CD4-positive, alpha-beta T cell (primary cell): ENCODE measurements at regions of chr9 and their contacts with region 1.

Region 1: DNA sequence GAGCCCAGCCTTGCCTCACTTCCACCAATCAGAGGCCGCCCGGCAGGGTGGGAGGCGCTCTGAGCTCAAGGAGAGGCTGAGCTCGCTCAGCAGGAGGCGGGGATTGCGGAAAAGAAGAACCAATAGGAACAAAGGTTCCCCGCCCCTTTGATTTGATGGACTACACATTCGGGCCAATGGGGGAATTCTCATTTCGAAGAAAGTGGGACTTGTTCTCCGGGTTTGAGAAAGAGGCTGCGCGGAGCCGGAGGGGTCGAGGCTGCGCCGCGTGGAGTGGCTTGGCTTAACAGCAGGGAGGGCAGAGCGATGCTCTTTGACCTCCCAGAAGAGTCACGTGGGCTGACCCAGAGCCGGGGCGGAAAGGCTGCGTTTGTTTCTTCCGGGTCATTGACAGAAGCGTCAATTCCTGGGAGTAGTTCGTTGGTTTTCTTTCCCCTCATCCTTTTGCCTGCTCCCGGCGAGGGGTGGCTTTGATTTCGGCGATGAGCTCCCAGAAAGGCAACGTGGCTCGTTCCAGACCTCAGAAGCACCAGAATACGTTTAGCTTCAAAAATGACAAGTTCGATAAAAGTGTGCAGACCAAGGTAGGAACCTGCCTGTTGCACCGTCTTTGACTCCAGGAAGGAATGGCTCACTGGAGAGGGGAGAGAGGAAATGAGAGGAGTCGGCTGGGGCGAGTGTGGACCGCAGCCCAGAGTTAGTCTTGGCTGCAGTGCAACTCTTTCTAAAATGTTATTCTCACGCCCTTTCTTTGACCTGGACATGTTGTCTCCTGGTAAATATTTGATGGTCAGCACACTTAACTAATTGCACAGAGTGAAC is at the start of gene C9orf85:
- DNase-seq: peak; percentile 89 to 99 (median 94)
- ATAC-seq: peak; percentile 93
- H3K4me3 ChIP-seq: peak within 1 kb of the TSS; percentile 67
- H3K4me3 Mint-ChIP-seq: peak within 1 kb of the TSS; percentile 99
- H3K27ac ChIP-seq: peak within 1 kb of the TSS; percentile 64 to 71
- H3K27ac Mint-ChIP-seq: peak within 1 kb of the TSS; percentile 86
- H3K4me1 ChIP-seq: peaks cover 13% of the 10 kb centered on the region
- H3K4me1 Mint-ChIP-seq: peaks cover 75% of the 10 kb centered on the region
- H3K27me3 ChIP-seq: no peaks in the 10 kb centered on the region
- H3K27me3 Mint-ChIP-seq: no peaks in the 10 kb centered on the region
- CTCF ChIP-seq: no peak
- total RNA-seq, gene C9orf85: 3.4 to 3.5 TPM

Region 2: GRCh38 chr9:71783120-71783530 is 128.3 kb before region 1 on chr9:
- CTCF ChIA-PET with region 1: interaction called, 6 read pairs
- POLR2A ChIA-PET with region 1: interaction called, 21 read pairs
- intact Hi-C with region 1: loop called in 1 of 2 experiments (anchors 1 kb)
- DNase-seq: peak; percentile 74 to 96 (median 82)
- ATAC-seq: peak; percentile 94
- H3K4me3 ChIP-seq: peak overlapping the region; percentile 8
- H3K4me3 Mint-ChIP-seq: peak overlapping the region; percentile 64
- H3K27ac ChIP-seq: peak overlapping the region; percentile 81 to 90
- H3K27ac Mint-ChIP-seq: peak overlapping the region; percentile 97
- H3K4me1 ChIP-seq: peaks cover 32% of the 10 kb centered on the region
- H3K4me1 Mint-ChIP-seq: peaks cover 51% of the 10 kb centered on the region
- H3K27me3 ChIP-seq: no peaks in the 10 kb centered on the region
- H3K27me3 Mint-ChIP-seq: no peaks in the 10 kb centered on the region
- CTCF ChIP-seq: peak; percentile 65

Region 3: DNA sequence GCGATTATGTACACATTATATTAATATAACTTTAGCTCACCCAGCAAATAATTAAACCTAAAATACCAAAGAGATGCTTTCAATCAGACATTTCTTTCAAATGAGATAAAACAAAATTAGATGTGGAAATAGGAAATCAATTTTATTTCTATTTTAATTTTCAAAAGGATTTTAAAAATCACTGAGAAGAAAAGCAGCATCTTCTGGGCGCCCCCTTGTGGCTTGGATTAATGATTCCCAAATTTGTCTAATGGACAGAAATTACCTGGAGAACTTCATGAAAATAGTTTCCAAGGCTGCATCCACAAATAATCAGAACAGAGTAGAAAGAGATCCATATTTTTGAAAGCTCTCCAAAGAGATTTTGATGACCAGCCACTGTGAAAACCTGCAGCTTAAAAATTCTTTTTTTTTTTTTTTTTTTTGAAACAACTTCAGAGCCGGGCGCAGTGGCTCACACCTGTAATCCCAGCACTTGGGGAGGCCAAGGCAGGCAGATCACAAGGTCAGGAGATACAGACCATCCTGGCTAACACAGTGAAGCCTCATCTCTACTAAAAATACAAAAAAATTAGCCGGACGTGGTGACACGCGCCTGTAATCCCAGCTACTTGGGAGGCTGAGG is 92.2 kb before region 1 on chr9:
- CTCF ChIA-PET with region 1: interaction called, 5 read pairs
- POLR2A ChIA-PET with region 1: interaction called, 3 read pairs
- intact Hi-C with region 1: loop called in 1 of 2 experiments (anchors 2 kb)
- DNase-seq: peak; percentile 12 to 82 (median 46)
- ATAC-seq: no peak
- H3K4me3 ChIP-seq: no peak overlapping the region
- H3K4me3 Mint-ChIP-seq: no peak overlapping the region
- H3K27ac ChIP-seq: no peak overlapping the region
- H3K27ac Mint-ChIP-seq: no peak overlapping the region
- H3K4me1 ChIP-seq: peaks cover 4% of the 10 kb centered on the region
- H3K4me1 Mint-ChIP-seq: peaks cover 23% of the 10 kb centered on the region
- H3K27me3 ChIP-seq: no peaks in the 10 kb centered on the region
- H3K27me3 Mint-ChIP-seq: no peaks in the 10 kb centered on the region
- CTCF ChIP-seq: peak; percentile 95

Region 4: DNA sequence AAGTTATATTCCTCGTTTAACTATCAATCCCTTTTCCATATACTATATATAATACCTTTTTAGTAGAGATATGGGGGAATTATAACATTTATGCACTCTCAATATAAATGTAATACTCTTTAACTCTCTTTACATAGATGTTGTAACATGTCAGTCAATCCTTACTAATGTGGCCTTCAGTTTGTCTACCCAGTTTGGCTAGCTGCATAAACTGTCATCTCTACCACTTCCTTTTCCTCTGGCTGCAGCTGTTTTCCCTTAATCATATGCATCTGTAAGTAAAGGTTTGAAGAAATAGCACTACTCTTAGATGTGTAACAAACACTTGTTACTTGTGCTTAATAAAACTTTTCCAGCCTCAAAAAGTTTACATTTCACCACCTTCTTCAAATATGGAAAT is 13.9 kb before region 1 on chr9:
- CTCF ChIA-PET with region 1: interaction called, 3 read pairs
- POLR2A ChIA-PET with region 1: interaction called, 22 read pairs
- intact Hi-C with region 1: loop called in 1 of 2 experiments (anchors 1 kb)
- DNase-seq: peak in 4 of 14 experiments; percentile 17 to 74 (median 48)
- ATAC-seq: peak; percentile 81
- H3K4me3 ChIP-seq: no peak overlapping the region
- H3K4me3 Mint-ChIP-seq: no peak overlapping the region
- H3K27ac ChIP-seq: no peak overlapping the region
- H3K27ac Mint-ChIP-seq: peak overlapping the region; percentile 5
- H3K4me1 ChIP-seq: peaks cover 18% of the 10 kb centered on the region
- H3K4me1 Mint-ChIP-seq: peaks cover 91% of the 10 kb centered on the region
- H3K27me3 ChIP-seq: no peaks in the 10 kb centered on the region
- H3K27me3 Mint-ChIP-seq: no peaks in the 10 kb centered on the region
- CTCF ChIP-seq: no peak

Region 5: GRCh38 chr9:73125651-73126050 is 1214.2 kb after region 1 on chr9:
- CTCF ChIA-PET with region 1: no interaction called
- POLR2A ChIA-PET with region 1: no interaction called
- intact Hi-C with region 1: loop called in 1 of 2 experiments (anchors 10 kb)
- DNase-seq: no peak
- ATAC-seq: no peak
- H3K4me3 ChIP-seq: no peak overlapping the region
- H3K4me3 Mint-ChIP-seq: no peak overlapping the region
- H3K27ac ChIP-seq: no peak overlapping the region
- H3K27ac Mint-ChIP-seq: no peak overlapping the region
- H3K4me1 ChIP-seq: no peaks in the 10 kb centered on the region
- H3K4me1 Mint-ChIP-seq: peaks cover 24% of the 10 kb centered on the region
- H3K27me3 ChIP-seq: no peaks in the 10 kb centered on the region
- H3K27me3 Mint-ChIP-seq: no peaks in the 10 kb centered on the region
- CTCF ChIP-seq: no peak

Region 6: DNA sequence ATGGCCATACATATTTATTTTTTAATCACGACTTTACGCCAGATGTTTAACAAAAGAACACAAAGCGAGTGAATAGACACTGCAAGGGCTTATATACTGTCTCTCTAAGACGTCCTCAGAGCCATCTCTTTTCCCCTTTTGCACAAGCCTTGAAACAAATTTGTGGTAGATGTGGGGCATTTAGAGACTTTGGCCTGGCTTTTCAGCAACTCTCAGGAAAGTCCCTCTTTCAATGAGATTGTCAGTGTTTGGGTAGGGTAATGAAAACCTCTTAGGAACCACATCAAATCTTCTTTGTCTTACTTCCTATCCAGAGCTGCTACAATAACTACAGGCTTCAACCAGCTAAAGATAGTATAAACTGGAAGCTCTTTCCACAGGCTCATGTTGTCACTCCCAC is 1620.2 kb after region 1 on chr9:
- CTCF ChIA-PET with region 1: no interaction called
- POLR2A ChIA-PET with region 1: no interaction called
- intact Hi-C with region 1: no loop called
- DNase-seq: no peak
- ATAC-seq: no peak
- H3K4me3 ChIP-seq: no peak overlapping the region
- H3K4me3 Mint-ChIP-seq: no peak overlapping the region
- H3K27ac ChIP-seq: no peak overlapping the region
- H3K27ac Mint-ChIP-seq: no peak overlapping the region
- H3K4me1 ChIP-seq: no peaks in the 10 kb centered on the region
- H3K4me1 Mint-ChIP-seq: no peaks in the 10 kb centered on the region
- H3K27me3 ChIP-seq: no peaks in the 10 kb centered on the region
- H3K27me3 Mint-ChIP-seq: no peaks in the 10 kb centered on the region
- CTCF ChIP-seq: no peak